ENCODE measurements at regions of chr14 and their contacts with region 1.

Region 1: DNA sequence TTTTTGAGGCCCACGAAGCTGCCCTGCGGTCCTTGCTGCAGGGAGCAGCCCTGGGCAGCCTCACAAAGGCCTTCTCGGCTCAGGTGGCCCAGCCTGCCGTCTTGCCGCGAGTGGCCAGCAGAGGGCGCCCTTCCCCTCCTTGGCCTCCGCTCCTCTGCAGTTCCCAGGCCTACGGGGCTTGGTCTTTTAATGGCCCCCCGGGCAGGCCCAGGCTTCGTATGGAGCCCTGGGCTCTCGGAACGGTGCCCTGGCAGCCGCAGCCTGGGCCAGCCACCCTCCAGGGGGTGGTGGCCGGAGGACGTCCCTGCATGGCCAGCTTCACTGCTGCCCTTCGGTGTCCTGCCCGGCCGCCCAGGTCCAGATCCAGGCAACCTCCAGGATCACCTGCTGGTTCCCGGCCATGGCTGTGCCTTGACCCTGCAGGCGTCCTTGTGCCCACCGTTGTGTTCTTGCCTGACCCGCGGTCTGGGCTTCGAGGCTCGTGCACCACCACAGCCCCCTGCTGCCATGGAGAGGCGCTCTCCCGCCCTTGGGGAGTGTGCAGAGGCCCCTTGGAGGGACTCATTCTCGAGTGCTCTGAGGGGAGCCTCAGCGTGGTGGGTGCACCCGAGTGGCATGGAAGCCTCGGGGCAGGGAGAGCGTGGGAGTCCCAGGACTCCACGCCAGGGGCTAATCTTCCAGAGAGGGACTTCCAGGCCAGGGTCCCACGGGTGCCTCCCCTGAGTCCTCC is 9.4 kb downstream of the ASPG start:
- DNase-seq: peak; percentile 63 to 85
- ATAC-seq: peak; percentile 63 to 88
- H3K4me3 ChIP-seq: no peak overlapping the region
- H3K27ac ChIP-seq: no peak overlapping the region
- H3K4me1 ChIP-seq: peaks cover 5% of the 10 kb centered on the region; the same call in 2 of the 3 replicates
- CTCF ChIP-seq: peak; percentile 82
- EP300 ChIP-seq: no peak
- POLR2A ChIP-seq: no peak
- RAD21 ChIP-seq: peak; percentile 57 to 62

Region 2: GRCh38 chr14:104107566-104108215 is 12.8 kb after region 1 on chr14:
- CTCF ChIA-PET with region 1: interaction called, 29 read pairs
- POLR2A ChIA-PET with region 1: no interaction called
- DNase-seq: no peak
- ATAC-seq: no peak
- H3K4me3 ChIP-seq: no peak overlapping the region
- H3K27ac ChIP-seq: no peak overlapping the region
- H3K4me1 ChIP-seq: no peaks in the 10 kb centered on the region
- CTCF ChIP-seq: no peak
- EP300 ChIP-seq: no peak
- POLR2A ChIP-seq: no peak
- RAD21 ChIP-seq: no peak

Region 3: DNA sequence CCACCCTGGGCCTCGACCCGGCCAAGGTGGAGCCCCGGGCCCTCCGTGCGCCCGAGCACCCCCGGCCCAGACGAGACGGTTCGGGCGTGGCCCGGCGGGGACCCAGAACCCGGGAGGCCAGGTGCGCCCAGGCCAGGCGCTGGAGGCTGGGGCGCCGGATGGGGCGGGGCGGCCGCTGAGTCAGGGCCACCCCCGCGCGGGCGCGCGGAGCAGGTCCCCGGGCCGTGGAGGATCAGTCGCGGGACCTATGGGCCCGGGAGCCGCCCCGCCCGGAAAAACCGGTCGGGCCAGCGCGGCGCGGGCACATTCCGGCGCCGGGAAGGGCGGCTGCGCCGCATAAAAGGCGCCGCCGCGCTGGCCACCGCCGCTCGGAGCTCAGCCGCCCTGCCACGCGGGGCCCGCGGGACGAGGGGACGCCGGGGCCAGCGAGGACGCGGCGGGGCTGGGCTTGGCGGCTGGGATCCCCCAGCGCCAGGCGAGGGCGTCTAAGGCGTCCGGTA is 21.9 kb after region 1 on chr14:
- CTCF ChIA-PET with region 1: interaction called, 19 read pairs
- POLR2A ChIA-PET with region 1: no interaction called
- DNase-seq: no peak
- ATAC-seq: no peak
- H3K4me3 ChIP-seq: peak overlapping the region; percentile 54
- H3K27ac ChIP-seq: peak overlapping the region; percentile 31 to 72; a peak in 5 of 6 replicates
- H3K4me1 ChIP-seq: peaks cover 5% of the 10 kb centered on the region; the same call in 2 of the 3 replicates
- CTCF ChIP-seq: no peak
- EP300 ChIP-seq: no peak
- POLR2A ChIP-seq: no peak
- RAD21 ChIP-seq: no peak

Region 4: GRCh38 chr14:104130974-104131651 is 36.2 kb after region 1 on chr14:
- CTCF ChIA-PET with region 1: interaction called, 24 read pairs
- POLR2A ChIA-PET with region 1: no interaction called
- DNase-seq: peak; percentile 55 to 65
- ATAC-seq: peak in 1 of 2 experiments; percentile 58; a peak in 3 of 6 replicates
- H3K4me3 ChIP-seq: no peak overlapping the region
- H3K27ac ChIP-seq: no peak overlapping the region
- H3K4me1 ChIP-seq: peaks cover 9% of the 10 kb centered on the region; the same call in 2 of the 3 replicates
- CTCF ChIP-seq: peak; percentile 63
- EP300 ChIP-seq: no peak
- POLR2A ChIP-seq: no peak
- RAD21 ChIP-seq: peak; percentile 68 to 85

Measured in A549 (cell line).